ENCODE measurements at regions of chr17 and their contacts with region 1.

Region 1: DNA sequence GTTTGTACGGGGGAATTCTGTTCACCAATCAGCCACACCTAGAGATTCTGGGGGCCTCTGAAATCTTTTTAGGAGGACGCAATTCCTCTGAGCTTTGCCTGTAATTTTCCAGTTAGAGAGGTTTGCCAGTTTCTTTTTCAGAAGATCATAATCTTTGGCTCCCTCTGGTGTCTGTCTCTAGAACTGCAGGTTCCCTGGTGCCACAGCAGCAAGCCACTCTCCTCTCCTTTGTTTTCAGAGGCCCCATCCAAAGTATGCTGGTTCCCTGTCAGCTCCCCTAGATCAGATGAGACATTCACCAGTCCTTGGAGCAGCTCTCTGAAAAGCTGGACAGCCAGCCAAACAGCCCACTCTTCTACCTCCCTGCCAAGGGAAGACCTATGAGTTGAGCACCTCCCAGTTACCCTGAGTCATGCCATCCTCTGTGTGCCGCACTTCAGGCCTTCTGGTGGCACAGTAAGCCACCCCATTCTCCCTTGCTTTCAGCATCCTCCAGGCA is 36.1 kb downstream of the RNF112 start:
- DNase-seq: peak; percentile 19
- H3K4me3 ChIP-seq: no peak overlapping the region
- CTCF ChIP-seq: peak; percentile 67

Region 2: DNA sequence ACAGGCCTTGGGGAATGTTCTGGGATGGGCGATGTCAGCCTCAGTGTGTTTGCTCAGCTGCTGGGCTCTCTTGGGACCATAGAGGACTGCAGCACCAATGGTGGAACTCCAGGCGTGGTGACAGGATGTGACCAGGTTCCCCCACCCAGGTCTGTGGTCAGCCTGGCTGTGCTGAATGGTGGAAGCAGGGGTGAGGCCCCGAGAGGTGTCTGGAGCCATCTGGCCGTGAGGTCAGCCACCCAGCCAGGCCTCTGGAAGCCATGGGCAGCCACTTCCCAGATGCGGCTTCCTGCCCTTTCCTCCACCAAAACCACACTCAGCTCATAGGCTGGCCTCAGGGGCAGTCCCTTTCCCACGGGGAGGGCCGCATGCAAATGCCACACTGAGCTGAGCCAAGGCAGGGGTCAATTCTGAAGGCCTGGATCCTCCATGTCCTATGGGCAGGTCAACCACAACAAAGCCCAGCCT is 76.6 kb before region 1 on chr17:
- CTCF ChIA-PET with region 1: interaction called, 293 read pairs
- POLR2A ChIA-PET with region 1: no interaction called
- DNase-seq: no peak
- H3K4me3 ChIP-seq: no peak overlapping the region
- CTCF ChIP-seq: no peak

Region 3: GRCh38 chr17:19384701-19385411 is 62.3 kb before region 1 on chr17:
- CTCF ChIA-PET with region 1: interaction called, 16 read pairs
- POLR2A ChIA-PET with region 1: interaction called, 5 read pairs
- DNase-seq: no peak
- H3K4me3 ChIP-seq: peak overlapping the region; percentile 40
- CTCF ChIP-seq: no peak

Region 4: DNA sequence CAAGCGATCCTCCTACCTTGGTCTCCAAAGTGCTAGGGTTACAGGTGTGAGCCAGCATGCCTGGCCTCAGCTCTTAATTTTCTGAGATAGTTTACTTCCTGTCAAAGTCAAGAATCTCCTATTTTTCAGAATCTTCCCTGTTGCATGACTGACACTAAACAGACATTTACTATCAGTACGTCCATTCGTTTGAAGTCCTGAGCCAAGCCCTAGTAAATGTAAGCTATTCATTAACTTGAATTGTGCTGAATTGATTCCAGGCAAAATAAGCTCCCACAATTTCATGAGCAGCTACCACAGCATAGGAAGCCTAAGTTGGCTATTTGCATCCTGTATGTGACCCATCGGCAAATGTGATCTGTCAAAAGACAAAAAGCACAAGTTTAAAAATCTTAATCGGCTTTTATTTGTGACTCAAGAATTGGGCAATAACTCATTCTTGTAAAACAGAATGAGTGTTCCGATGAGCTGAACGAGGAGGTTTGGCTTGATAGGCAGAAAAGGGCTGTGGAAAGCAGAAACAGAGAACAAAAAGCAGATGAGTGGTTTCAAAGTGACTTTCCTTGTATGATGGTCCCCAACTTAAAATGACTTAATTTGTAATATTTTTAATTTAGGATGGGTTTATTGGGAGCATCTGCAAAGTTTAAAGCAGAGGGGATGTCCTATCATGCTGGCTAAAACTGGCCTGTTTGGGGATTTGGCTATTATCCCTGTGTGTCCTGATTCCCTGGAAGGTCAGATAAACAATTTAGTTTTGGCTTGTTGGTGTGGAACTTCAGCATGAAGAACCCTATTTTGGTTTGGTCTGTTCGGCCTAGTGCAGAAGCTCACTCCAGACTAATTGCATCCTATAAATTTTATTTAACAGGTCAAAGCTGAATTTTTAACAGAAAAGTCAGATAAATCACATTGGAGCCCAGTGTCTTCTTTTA is 21.9 kb before region 1 on chr17:
- CTCF ChIA-PET with region 1: interaction called, 22 read pairs
- POLR2A ChIA-PET with region 1: no interaction called
- DNase-seq: no peak
- H3K4me3 ChIP-seq: no peak overlapping the region
- CTCF ChIP-seq: no peak

Region 5: GRCh38 chr17:19457830-19458271 is 10.7 kb after region 1 on chr17:
- CTCF ChIA-PET with region 1: interaction called, 27 read pairs
- POLR2A ChIA-PET with region 1: interaction called, 3 read pairs
- DNase-seq: no peak
- H3K4me3 ChIP-seq: no peak overlapping the region
- CTCF ChIP-seq: no peak

Region 6: GRCh38 chr17:19596869-19597268 is 149.7 kb after region 1 on chr17:
- CTCF ChIA-PET with region 1: no interaction called
- POLR2A ChIA-PET with region 1: no interaction called
- DNase-seq: no peak
- H3K4me3 ChIP-seq: no peak overlapping the region
- CTCF ChIP-seq: no peak

Measured in AG04449 (cell line).